ENCODE measurements at regions of chr9 and their contacts with region 1.

Region 1: DNA sequence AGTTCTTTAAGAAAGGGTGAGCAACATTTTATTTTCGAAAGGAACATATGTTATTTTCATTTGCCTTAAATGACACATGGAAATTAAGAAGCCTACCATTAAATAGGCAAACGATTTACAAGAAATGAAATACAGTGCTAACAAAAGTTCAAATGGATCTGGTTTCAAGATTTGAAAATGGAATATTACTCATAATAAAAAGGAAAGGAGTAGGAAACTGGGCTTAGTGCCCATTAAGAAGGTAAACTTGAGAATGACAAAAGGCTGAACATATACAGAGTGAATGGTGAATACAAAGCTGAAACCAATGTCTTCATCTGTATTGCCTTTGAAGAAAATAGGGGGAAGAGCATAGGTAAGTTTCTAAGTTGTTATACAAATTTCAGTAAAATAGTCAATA is 974.2 kb upstream of the C9orf72 start:
- DNase-seq: no peak
- ATAC-seq: no peak
- H3K4me3 ChIP-seq: no peak overlapping the region
- H3K4me3 Mint-ChIP-seq: no peak overlapping the region
- H3K27ac ChIP-seq: no peak overlapping the region
- H3K27ac Mint-ChIP-seq: no peak overlapping the region
- H3K4me1 ChIP-seq: no peaks in the 10 kb centered on the region
- H3K4me1 Mint-ChIP-seq: no peaks in the 10 kb centered on the region
- H3K27me3 ChIP-seq: no peaks in the 10 kb centered on the region
- H3K27me3 Mint-ChIP-seq: no peaks in the 10 kb centered on the region

Region 2: DNA sequence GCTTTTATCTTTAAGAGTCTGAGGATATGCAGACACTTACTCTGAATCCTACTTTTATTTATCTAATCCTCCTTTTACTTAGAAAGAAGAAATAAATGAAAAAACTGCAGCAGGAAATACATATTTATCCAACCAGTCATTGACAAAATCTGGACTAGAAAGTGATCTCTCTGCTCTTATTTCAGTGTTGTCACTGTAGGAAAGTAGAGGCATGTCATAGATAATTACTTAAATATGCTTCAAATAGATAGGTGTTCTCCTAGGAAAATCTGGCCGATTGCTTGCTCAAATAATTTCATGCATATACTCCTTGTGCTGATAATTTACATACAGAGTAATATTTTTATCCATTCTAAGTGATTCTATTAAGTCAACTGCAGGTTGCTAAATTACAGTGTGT is 1027.7 kb after region 1 on chr9:
- CTCF ChIA-PET with region 1: interaction called in 1 of 2 experiments, 10 read pairs
- POLR2A ChIA-PET with region 1: no interaction called
- DNase-seq: no peak
- ATAC-seq: no peak
- H3K4me3 ChIP-seq: no peak overlapping the region
- H3K4me3 Mint-ChIP-seq: no peak overlapping the region
- H3K27ac ChIP-seq: no peak overlapping the region
- H3K27ac Mint-ChIP-seq: no peak overlapping the region
- H3K4me1 ChIP-seq: no peaks in the 10 kb centered on the region
- H3K4me1 Mint-ChIP-seq: no peaks in the 10 kb centered on the region
- H3K27me3 ChIP-seq: no peaks in the 10 kb centered on the region
- H3K27me3 Mint-ChIP-seq: no peaks in the 10 kb centered on the region